ENCODE measurements at regions of chr20 and their contacts with region 1.

Region 1: DNA sequence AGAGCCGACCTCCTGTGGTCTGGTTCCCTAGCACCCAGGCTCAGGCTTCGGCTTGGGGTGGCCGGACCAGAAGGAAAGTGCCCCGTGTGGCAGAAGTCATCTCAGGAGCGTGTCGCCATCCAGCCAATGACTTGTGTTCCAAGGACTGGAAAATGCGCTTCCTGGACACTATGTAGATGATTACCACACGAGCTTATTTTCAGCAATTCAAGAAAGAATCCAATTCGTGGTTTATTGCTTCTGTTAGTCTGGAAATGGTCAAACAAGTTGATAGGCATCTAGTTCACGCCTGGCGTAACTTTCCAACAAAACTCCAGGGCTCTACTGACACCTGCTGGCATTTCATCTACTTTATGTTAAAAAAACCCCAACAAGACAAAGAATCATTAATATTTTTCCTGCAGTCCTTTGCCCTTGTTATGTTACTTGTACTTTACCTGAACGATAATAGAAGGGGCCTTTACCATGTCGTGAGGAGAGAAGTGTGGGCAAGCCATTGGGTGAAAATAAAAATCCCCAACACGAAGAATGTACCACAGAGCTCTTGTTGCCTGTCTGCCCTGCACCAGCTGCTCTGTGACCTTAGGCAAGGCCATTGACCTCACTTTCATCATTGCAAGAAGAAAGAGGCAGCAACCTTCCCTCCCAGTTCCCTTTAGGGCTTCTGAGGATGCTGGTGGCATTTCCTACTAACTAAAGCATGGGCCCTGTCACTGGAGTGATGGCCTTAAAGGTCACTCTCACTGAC is 154.7 kb upstream of the LAMP5 start:
- DNase-seq: peak; percentile 53 to 62
- H3K4me3 ChIP-seq: no peak overlapping the region
- H3K4me3 Mint-ChIP-seq: no peak overlapping the region
- H3K27ac Mint-ChIP-seq: no peak overlapping the region
- H3K4me1 ChIP-seq: no peaks in the 10 kb centered on the region
- H3K4me1 Mint-ChIP-seq: no peaks in the 10 kb centered on the region
- H3K27me3 ChIP-seq: no peaks in the 10 kb centered on the region
- H3K27me3 Mint-ChIP-seq: no peaks in the 10 kb centered on the region
- CTCF ChIP-seq: peak; percentile 50 to 66

Region 2: DNA sequence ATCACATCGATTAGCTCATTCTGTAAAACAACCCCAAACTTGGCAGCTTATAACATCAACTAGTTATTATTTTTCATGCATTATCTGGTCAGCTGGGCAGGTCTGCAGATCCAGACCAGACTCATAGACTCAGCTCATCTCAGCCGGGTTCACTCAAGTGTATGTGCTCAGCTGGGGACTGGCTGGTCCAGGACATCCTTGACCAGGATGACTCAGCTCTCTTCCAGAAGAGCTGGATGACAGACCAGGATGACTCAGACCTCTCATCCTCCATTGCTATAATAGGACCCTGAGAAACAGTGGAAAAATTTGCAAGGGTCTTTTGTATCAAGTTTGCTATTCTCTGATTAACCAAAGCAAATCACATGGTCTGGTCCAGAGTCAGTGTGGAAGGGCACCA is 603.3 kb before region 1 on chr20:
- CTCF ChIA-PET with region 1: no interaction called
- POLR2A ChIA-PET with region 1: no interaction called
- intact Hi-C with region 1: loop called (anchors 1 kb)
- DNase-seq: no peak
- H3K4me3 ChIP-seq: no peak overlapping the region
- H3K4me3 Mint-ChIP-seq: no peak overlapping the region
- H3K27ac Mint-ChIP-seq: no peak overlapping the region
- H3K4me1 ChIP-seq: no peaks in the 10 kb centered on the region
- H3K4me1 Mint-ChIP-seq: peaks cover 7% of the 10 kb centered on the region
- H3K27me3 ChIP-seq: no peaks in the 10 kb centered on the region
- H3K27me3 Mint-ChIP-seq: no peaks in the 10 kb centered on the region
- CTCF ChIP-seq: no peak

Region 3: GRCh38 chr20:8853805-8854338 is 505.9 kb before region 1 on chr20:
- CTCF ChIA-PET with region 1: interaction called, 3 read pairs
- POLR2A ChIA-PET with region 1: no interaction called
- intact Hi-C with region 1: loop called (anchors 1 kb)
- DNase-seq: peak in 1 of 2 experiments; percentile 66
- H3K4me3 ChIP-seq: no peak overlapping the region
- H3K4me3 Mint-ChIP-seq: no peak overlapping the region
- H3K27ac Mint-ChIP-seq: no peak overlapping the region
- H3K4me1 ChIP-seq: peaks cover 4% of the 10 kb centered on the region; the same call in 1 of the 2 replicates
- H3K4me1 Mint-ChIP-seq: no peaks in the 10 kb centered on the region
- H3K27me3 ChIP-seq: no peaks in the 10 kb centered on the region
- H3K27me3 Mint-ChIP-seq: no peaks in the 10 kb centered on the region
- CTCF ChIP-seq: peak; percentile 74 to 78

Region 4: DNA sequence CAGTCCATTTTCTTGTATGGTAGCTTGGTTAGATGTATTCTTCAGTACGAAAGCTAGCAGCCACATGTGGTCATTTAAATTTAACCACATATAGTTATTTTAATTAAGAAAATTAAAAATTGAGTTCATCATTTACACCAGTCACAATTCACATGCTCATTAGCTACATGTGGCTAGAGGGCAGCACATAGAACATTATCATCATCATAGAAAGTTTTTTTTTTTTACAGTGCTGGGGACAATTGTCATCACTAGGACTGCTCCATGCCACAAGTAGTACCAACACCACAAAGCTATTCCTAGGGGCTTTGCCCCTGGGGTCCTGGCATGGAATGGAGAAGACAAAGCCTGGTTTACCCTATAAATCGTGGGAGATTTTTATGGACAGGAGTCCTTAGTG is 260.4 kb before region 1 on chr20:
- CTCF ChIA-PET with region 1: no interaction called
- POLR2A ChIA-PET with region 1: no interaction called
- intact Hi-C with region 1: loop called (anchors 5 kb)
- DNase-seq: no peak
- H3K4me3 ChIP-seq: no peak overlapping the region
- H3K4me3 Mint-ChIP-seq: no peak overlapping the region
- H3K27ac Mint-ChIP-seq: no peak overlapping the region
- H3K4me1 ChIP-seq: no peaks in the 10 kb centered on the region
- H3K4me1 Mint-ChIP-seq: no peaks in the 10 kb centered on the region
- H3K27me3 ChIP-seq: no peaks in the 10 kb centered on the region
- H3K27me3 Mint-ChIP-seq: peaks cover 3% of the 10 kb centered on the region
- CTCF ChIP-seq: no peak

Region 5: DNA sequence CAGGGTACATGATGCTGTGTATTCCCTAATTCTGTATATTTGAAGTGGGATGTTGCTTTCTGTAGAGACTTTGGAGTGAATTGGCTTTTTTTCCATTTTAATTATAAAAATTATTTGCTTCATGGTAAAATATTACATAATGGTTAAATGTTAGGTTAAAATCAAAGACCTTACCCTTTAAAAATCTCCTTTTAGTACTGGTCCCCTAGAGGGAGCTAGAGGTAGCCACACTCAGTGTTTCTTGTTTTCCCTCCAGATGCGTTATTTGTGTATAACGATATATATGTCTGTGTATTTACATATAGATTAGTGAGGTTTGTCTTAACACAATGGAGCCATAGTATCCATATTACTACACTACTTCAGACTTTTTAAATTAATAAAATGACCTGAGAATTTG is 144.2 kb before region 1 on chr20:
- CTCF ChIA-PET with region 1: no interaction called
- POLR2A ChIA-PET with region 1: no interaction called
- intact Hi-C with region 1: loop called (anchors 1 kb)
- DNase-seq: peak in 1 of 2 experiments; percentile 15
- H3K4me3 ChIP-seq: no peak overlapping the region
- H3K4me3 Mint-ChIP-seq: no peak overlapping the region
- H3K27ac Mint-ChIP-seq: no peak overlapping the region
- H3K4me1 ChIP-seq: no peaks in the 10 kb centered on the region
- H3K4me1 Mint-ChIP-seq: no peaks in the 10 kb centered on the region
- H3K27me3 ChIP-seq: no peaks in the 10 kb centered on the region; the same call in 1 of the 2 replicates
- H3K27me3 Mint-ChIP-seq: no peaks in the 10 kb centered on the region
- CTCF ChIP-seq: peak; percentile 42 to 62

Region 6: DNA sequence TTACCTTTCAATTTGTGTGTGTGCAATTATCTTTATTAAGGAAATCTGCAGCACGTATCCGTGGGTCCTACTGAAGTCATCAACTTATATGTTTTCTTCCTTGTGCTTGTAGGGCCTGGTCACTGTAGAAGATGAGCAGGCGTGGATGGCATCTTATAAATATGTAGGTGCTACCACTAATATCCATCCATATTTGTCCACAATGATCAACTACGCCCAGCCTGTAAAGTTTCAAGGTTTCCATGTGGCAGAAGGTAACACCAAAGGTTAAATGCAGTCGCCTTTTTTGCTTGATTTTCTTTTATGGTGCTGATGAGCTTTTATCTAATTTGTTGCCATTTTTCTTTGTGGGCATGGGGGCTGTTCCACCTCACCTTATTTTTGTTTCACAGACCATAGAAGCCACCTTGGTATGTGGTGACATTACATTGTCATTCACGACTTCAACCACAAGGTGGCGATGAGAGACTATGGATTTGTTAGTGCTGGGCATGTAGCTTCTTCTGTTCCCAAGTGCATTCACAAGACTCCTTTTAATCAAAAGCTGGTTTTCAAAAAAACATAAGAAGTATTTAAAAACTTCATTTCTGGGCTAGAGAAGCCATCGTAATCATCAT is 48.2 kb after region 1 on chr20:
- CTCF ChIA-PET with region 1: no interaction called
- POLR2A ChIA-PET with region 1: no interaction called
- intact Hi-C with region 1: no loop called
- DNase-seq: peak; percentile 66 to 76
- H3K4me3 ChIP-seq: no peak overlapping the region
- H3K4me3 Mint-ChIP-seq: no peak overlapping the region
- H3K27ac Mint-ChIP-seq: no peak overlapping the region
- H3K4me1 ChIP-seq: no peaks in the 10 kb centered on the region
- H3K4me1 Mint-ChIP-seq: no peaks in the 10 kb centered on the region
- H3K27me3 ChIP-seq: no peaks in the 10 kb centered on the region
- H3K27me3 Mint-ChIP-seq: no peaks in the 10 kb centered on the region
- CTCF ChIP-seq: peak; percentile 79 to 81

Measured in Caco-2 (cell line).